Mammary epithelial cell (primary cell): ENCODE measurements at regions of chr18 and their contacts with region 1.

Region 1: GRCh38 chr18:57502624-57503023 is 67.5 kb downstream of the ONECUT2 start:
- DNase-seq: no peak
- H3K4me3 ChIP-seq: no peak overlapping the region
- H3K27ac ChIP-seq: no peak overlapping the region
- H3K4me1 ChIP-seq: no peaks in the 10 kb centered on the region
- H3K27me3 ChIP-seq: no peaks in the 10 kb centered on the region
- CTCF ChIP-seq: no peak

Region 2: GRCh38 chr18:57542812-57543427 is 40.3 kb after region 1 on chr18:
- CTCF ChIA-PET with region 1: interaction called, 30 read pairs
- dilution Hi-C with region 1: no loop called
- in situ Hi-C with region 1: no loop called
- intact Hi-C with region 1: no loop called
- DNase-seq: peak; percentile 5
- H3K4me3 ChIP-seq: no peak overlapping the region
- H3K27ac ChIP-seq: no peak overlapping the region
- H3K4me1 ChIP-seq: peaks cover 14% of the 10 kb centered on the region
- H3K27me3 ChIP-seq: no peaks in the 10 kb centered on the region
- CTCF ChIP-seq: no peak